ENCODE measurements at regions of chr2 and their contacts with region 1.

Region 1: GRCh38 chr2:234343372-234343771 is 153.5 kb downstream of the ARL4C start:
- DNase-seq: no peak
- H3K4me3 ChIP-seq: no peak overlapping the region
- H3K27ac ChIP-seq: no peak overlapping the region
- H3K4me1 ChIP-seq: no peaks in the 10 kb centered on the region
- H3K27me3 ChIP-seq: no peaks in the 10 kb centered on the region
- CTCF ChIP-seq: no peak

Region 2: GRCh38 chr2:234411793-234412192 is 68.4 kb after region 1 on chr2:
- CTCF ChIA-PET with region 1: no interaction called
- POLR2A ChIA-PET with region 1: interaction called, 13 read pairs
- intact Hi-C with region 1: no loop called
- DNase-seq: no peak
- H3K4me3 ChIP-seq: no peak overlapping the region
- H3K27ac ChIP-seq: no peak overlapping the region
- H3K4me1 ChIP-seq: no peaks in the 10 kb centered on the region
- H3K27me3 ChIP-seq: peaks cover 5% of the 10 kb centered on the region
- CTCF ChIP-seq: no peak

Measured in A673 (cell line).